GM12878 (cell line): ENCODE measurements at regions of chr1 and their contacts with region 1.

Region 1: DNA sequence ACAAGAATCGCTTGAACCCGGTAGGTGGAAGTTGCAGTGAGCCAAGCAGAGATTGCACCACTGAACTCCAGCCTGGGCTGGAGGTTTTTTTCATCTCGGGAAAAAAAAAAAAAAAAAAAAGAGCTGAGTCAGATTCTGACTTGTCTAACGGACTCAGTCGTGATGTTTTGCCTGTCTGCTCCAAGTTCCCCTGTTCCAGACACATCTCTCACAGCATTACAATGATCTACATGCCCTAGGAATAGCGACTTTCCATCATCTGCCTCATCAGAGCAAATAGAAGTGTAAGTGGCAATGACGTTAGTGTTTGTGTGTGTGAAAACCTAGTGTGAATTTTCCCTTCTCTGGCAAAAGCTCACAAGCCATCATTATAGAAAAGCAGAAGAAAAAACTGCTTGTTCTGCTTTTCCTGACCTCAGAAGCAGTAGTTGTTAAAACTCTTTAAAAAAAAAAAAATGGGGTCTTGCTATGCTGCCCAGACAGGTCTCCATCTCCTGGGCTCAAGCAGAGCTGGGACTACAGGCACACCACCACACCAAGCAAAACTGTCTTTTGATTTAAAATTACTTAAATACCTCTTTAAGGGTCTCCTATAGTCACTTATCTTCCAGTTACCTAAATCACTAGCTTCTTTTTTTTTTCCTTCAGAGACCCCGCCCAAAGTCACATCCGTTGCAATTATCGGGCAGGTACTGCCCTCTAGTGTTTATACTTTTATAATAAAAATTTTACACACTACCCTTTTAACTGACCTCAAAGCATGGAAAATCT is 37.3 kb downstream of the PLEKHO1 start:
- DNase-seq: no peak
- ATAC-seq: peak; percentile 91
- H3K4me3 ChIP-seq: no peak overlapping the region
- H3K27ac ChIP-seq: no peak overlapping the region; the same call in 1 of the 2 replicates
- H3K4me1 ChIP-seq: peaks cover 4% of the 10 kb centered on the region
- H3K27me3 ChIP-seq: no peaks in the 10 kb centered on the region
- CTCF ChIP-seq: peak; percentile 26 to 39 (median 38); a peak in 4 of 6 replicates
- EP300 ChIP-seq: peak; percentile 43 to 80; a peak in 3 of 4 replicates
- POLR2A ChIP-seq: no peak
- RAD21 ChIP-seq: peak; percentile 71

Region 2: GRCh38 chr1:150067184-150068036 is 119.6 kb before region 1 on chr1 and contains the start of gene VPS45:
- CTCF ChIA-PET with region 1: interaction called, 79 read pairs
- POLR2A ChIA-PET with region 1: interaction called, 4 read pairs
- RAD21 ChIA-PET with region 1: interaction called, 35 read pairs
- SMC1A ChIA-PET with region 1: interaction called, 32 read pairs
- in situ Hi-C with region 1: no loop called
- intact Hi-C with region 1: no loop called
- DNase-seq: peak; percentile 71
- ATAC-seq: peak; percentile 98
- H3K4me3 ChIP-seq: peak within 1 kb of the TSS; percentile 84
- H3K27ac ChIP-seq: peak within 1 kb of the TSS; percentile 97
- H3K4me1 ChIP-seq: peaks cover 9% of the 10 kb centered on the region; the same call in 1 of the 2 replicates
- H3K27me3 ChIP-seq: no peaks in the 10 kb centered on the region
- CTCF ChIP-seq: peak; percentile 34 to 44 (median 38); a peak in 4 of 6 replicates
- EP300 ChIP-seq: peak; percentile 13 to 36; a peak in 2 of 4 replicates
- POLR2A ChIP-seq: peak; percentile 86
- RAD21 ChIP-seq: 0 out of 2 replicates have a peak, but pooled peaks have one; percentile 18
- polyA plus RNA-seq, gene VPS45: 24.4 to 28.7 TPM

Region 3: GRCh38 chr1:150080784-150081183 is 106.2 kb before region 1 on chr1:
- CTCF ChIA-PET with region 1: interaction called, 13 read pairs
- POLR2A ChIA-PET with region 1: no interaction called
- RAD21 ChIA-PET with region 1: interaction called, 4 read pairs
- SMC1A ChIA-PET with region 1: interaction called, 3 read pairs
- in situ Hi-C with region 1: no loop called
- intact Hi-C with region 1: no loop called
- DNase-seq: no peak
- ATAC-seq: no peak
- H3K4me3 ChIP-seq: no peak overlapping the region
- H3K27ac ChIP-seq: peak overlapping the region; percentile 39; the same call in 1 of the 2 replicates
- H3K4me1 ChIP-seq: peaks cover 3% of the 10 kb centered on the region; the same call in 1 of the 2 replicates
- H3K27me3 ChIP-seq: no peaks in the 10 kb centered on the region
- CTCF ChIP-seq: no peak
- EP300 ChIP-seq: no peak
- POLR2A ChIP-seq: no peak
- RAD21 ChIP-seq: no peak

Region 4: DNA sequence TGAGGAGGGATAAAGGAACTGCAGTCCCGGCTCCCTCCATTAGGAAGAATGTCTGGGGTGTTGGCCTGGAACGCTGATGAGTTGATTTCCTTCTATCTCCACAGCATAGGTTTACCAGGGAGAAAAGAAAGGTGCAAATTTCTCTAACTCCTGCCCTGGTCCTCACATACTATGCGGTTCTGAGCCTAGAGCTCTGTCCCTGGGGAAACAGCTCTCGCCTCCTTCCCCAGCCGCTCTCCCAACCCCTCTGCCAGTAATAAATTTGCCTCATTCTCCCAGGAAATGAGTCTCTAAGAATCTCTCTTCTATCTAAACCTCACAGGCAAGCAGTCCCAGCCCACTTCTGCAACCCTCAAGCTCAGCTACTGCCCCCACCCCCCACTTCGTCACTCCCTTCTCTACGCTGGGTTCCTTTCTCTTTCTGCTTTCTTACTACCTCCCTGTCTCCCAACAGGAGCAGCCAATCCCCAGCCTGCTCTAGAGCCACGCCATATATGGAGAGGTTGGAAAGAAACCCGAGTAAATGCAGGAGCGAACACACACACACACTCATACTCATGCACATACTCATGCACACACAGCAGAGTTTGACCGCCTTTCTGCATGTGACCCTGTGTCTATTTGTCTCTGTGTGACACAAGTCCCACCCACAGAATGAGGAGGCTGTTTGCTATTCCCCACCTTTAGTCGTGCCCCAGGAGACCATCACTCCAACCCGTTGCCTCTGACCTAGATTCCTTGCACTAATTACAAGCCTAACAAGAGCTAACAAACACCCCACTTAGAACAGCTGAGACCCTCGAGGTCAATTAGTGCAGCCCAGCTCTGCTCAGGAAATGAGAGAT is 23.9 kb before region 1 on chr1:
- CTCF ChIA-PET with region 1: interaction called, 78 read pairs
- POLR2A ChIA-PET with region 1: interaction called, 7 read pairs
- RAD21 ChIA-PET with region 1: interaction called, 32 read pairs
- SMC1A ChIA-PET with region 1: interaction called, 33 read pairs
- in situ Hi-C with region 1: no loop called
- intact Hi-C with region 1: no loop called
- DNase-seq: peak; percentile 97
- ATAC-seq: peak; percentile 66
- H3K4me3 ChIP-seq: peak overlapping the region; percentile 56
- H3K27ac ChIP-seq: peak overlapping the region; percentile 100
- H3K4me1 ChIP-seq: peaks cover 80% of the 10 kb centered on the region
- H3K27me3 ChIP-seq: no peaks in the 10 kb centered on the region
- CTCF ChIP-seq: no peak
- EP300 ChIP-seq: peak in 1 of 2 experiments; percentile 17; a peak in 1 of 4 replicates
- POLR2A ChIP-seq: peak; percentile 84
- RAD21 ChIP-seq: no peak

Region 5: GRCh38 chr1:150235852-150236613 is 49.1 kb after region 1 on chr1 and contains the start of gene ANP32E:
- CTCF ChIA-PET with region 1: interaction called, 6 read pairs
- POLR2A ChIA-PET with region 1: interaction called, 4 read pairs
- RAD21 ChIA-PET with region 1: interaction called, 4 read pairs
- SMC1A ChIA-PET with region 1: interaction called, 11 read pairs
- in situ Hi-C with region 1: no loop called
- intact Hi-C with region 1: no loop called
- DNase-seq: peak; percentile 99
- ATAC-seq: peak; percentile 87
- H3K4me3 ChIP-seq: peak within 1 kb of the TSS; percentile 87
- H3K27ac ChIP-seq: peak within 1 kb of the TSS; percentile 99
- H3K4me1 ChIP-seq: no peaks in the 10 kb centered on the region
- H3K27me3 ChIP-seq: no peaks in the 10 kb centered on the region
- CTCF ChIP-seq: no peak; a peak in 2 of 6 replicates
- EP300 ChIP-seq: 0 out of 4 replicates have a peak, but pooled peaks of 1 of the 2 experiments have one; percentile 24
- POLR2A ChIP-seq: peak; percentile 98
- RAD21 ChIP-seq: no peak
- polyA plus RNA-seq, gene ANP32E: 142 to 250 TPM